Posterior cingulate gyrus (tissue), 11 donors: ENCODE measurements at regions of chr12 and their contacts with region 1.

Region 1: DNA sequence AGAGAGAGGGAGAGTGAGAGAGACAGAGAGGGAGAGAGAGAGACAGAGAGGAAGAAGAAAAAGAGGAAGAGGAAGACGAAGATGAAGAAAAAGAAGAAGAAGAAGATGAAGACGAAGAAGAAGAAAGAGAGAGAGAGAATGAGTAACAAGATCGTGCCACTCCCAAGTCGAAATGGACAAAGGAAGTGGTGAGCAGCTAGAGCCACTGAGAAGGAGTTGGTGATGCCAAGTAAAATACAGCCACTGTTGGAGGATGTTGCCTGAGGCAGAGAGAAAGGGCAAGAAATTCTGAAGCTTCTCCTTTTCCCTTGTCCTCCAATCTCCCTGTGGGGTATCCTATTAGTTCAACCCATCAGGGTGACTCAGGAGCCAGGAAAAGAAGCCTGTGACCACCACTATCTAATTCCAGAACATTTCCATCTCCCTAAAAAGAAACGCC is 12.5 kb upstream of the ANAPC5 start:
- DNase-seq: no peak

Region 2: GRCh38 chr12:121345151-121345815 is 19.4 kb before region 1 on chr12:
- intact Hi-C with region 1: loop called (anchors 1 kb)
- DNase-seq: peak in 2 of 10 donors; percentile 26 to 67